ENCODE measurements at regions of chr21 and their contacts with region 1.

Region 1: DNA sequence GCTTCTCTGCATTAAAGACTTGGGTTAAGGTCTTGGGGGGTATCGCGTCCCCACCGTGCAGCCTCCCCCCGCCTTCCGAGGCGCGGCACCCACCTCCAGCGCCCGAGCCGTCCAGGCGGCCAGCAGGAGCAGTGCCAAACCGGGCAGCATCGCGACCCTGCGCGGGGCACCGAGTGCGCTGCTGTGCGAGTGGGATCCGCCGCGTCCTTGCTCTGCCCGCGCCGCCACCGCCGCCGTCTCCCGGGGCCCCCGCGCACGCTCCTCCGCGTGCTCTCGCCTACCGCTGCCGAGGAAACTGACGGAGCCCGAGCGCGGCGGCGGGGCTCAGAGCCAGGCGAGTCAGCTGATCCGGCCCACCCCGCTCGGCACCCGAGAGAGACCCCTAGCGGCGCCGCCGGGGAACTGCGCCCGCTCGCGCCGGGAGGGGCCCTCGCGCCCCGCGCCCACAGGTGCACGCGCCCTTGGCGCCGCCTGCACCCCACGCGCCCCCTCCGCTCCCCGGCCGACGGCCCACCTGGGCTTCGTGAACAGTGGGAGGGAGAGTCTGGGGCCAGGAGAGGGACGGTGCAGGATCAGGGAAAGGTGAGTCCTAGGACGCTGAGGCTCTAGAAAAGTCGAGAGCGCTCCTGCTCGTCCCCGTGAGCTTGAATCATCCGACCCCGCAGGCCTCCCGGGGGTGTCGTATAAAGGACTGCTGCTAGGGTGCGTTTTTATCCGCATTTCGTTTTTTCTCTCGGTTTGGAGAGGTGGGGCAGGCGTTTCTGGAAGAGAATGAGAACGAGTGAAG is at the start of gene APP:
- DNase-seq: peak; percentile 87
- H3K4me3 Mint-ChIP-seq: peak within 1 kb of the TSS; percentile 88
- H3K27ac Mint-ChIP-seq: peak within 1 kb of the TSS; percentile 67
- H3K4me1 Mint-ChIP-seq: peaks cover 28% of the 10 kb centered on the region
- H3K27me3 Mint-ChIP-seq: peaks cover 4% of the 10 kb centered on the region
- total RNA-seq, gene APP: 61.3 and 66.6 TPM in 2 replicates

Region 2: GRCh38 chr21:25215698-25216384 is 954.8 kb before region 1 on chr21:
- intact Hi-C with region 1: no loop called
- DNase-seq: no peak
- H3K4me3 Mint-ChIP-seq: no peak overlapping the region
- H3K27ac Mint-ChIP-seq: no peak overlapping the region
- H3K4me1 Mint-ChIP-seq: no peaks in the 10 kb centered on the region
- H3K27me3 Mint-ChIP-seq: no peaks in the 10 kb centered on the region

Region 3: GRCh38 chr21:25801217-25802014 is 369.2 kb before region 1 on chr21:
- intact Hi-C with region 1: loop called (anchors 5 kb)
- DNase-seq: peak; percentile 85
- H3K4me3 Mint-ChIP-seq: no peak overlapping the region
- H3K27ac Mint-ChIP-seq: no peak overlapping the region
- H3K4me1 Mint-ChIP-seq: peaks cover 7% of the 10 kb centered on the region
- H3K27me3 Mint-ChIP-seq: peaks cover 14% of the 10 kb centered on the region

Region 4: GRCh38 chr21:25881525-25882376 is 288.9 kb before region 1 on chr21:
- intact Hi-C with region 1: loop called (anchors 1 kb)
- DNase-seq: peak; percentile 48
- H3K4me3 Mint-ChIP-seq: no peak overlapping the region
- H3K27ac Mint-ChIP-seq: no peak overlapping the region
- H3K4me1 Mint-ChIP-seq: no peaks in the 10 kb centered on the region
- H3K27me3 Mint-ChIP-seq: no peaks in the 10 kb centered on the region

Region 5: GRCh38 chr21:25895565-25896205 is 275.0 kb before region 1 on chr21:
- intact Hi-C with region 1: loop called (anchors 1 kb)
- DNase-seq: no peak
- H3K4me3 Mint-ChIP-seq: no peak overlapping the region
- H3K27ac Mint-ChIP-seq: no peak overlapping the region
- H3K4me1 Mint-ChIP-seq: peaks cover 7% of the 10 kb centered on the region
- H3K27me3 Mint-ChIP-seq: no peaks in the 10 kb centered on the region

Region 6: DNA sequence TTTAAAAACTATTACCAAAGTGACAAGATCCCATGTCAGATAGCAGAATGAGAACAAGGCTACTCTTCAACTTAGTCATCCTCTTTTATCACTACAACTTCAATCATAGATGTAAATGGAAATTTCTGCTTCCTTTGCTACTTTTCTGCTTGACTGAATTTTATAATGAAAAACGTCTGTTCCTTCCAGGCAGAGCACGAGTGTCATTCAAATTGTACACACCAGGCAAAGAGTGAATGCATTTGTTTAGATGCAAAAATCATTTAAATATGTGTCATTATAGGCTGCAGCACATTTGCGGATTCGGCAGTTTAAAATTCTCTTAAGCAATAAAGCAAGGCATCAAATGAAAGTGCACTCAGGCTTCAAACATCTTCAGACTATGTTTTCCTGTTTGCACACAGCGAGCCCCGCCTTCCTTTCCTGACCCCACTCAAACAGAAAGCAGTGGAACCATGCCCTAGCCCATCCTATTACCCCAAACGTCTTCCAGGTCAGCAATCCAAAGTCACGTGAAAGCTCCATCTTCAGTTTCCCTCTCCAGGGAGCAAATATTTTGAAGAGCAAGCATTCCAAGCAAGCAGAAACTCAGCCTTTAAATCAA is 99.7 kb before region 1 on chr21:
- intact Hi-C with region 1: loop called (anchors 2 kb)
- DNase-seq: peak; percentile 40
- H3K4me3 Mint-ChIP-seq: peak overlapping the region; percentile 65
- H3K27ac Mint-ChIP-seq: peak overlapping the region; percentile 58
- H3K4me1 Mint-ChIP-seq: peaks cover 44% of the 10 kb centered on the region
- H3K27me3 Mint-ChIP-seq: no peaks in the 10 kb centered on the region

Region 7: DNA sequence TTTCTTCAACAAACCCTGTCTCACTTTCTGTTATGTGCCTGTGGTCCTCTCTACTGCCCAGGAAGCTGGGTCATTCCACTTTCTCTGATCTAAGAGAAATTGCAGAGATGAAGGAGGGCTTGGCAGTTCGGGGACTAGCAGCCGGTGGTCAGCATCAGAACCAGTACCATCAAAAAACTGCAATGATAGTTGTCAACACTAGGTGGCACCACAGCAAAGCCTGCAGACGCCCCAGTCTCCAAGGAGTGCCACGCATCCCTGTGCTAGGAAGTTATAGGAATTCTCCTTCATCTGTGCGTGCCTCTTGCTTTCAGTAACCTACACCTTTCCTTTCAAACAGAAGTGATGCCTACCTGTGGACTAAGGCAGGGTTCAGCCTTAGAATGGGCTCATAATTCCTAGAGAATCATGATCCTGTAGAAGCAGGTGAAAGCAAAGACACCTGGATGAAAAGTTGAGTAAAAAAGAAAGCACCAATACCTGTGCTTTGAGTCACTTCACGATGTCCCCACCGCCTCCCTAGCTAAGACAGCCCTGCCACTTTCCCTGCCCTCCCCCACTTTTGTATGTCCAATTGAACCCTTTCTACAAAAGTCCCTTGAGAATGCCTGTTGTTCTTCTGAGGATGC is 545.3 kb after region 1 on chr21:
- intact Hi-C with region 1: loop called (anchors 2 kb)
- DNase-seq: no peak
- H3K4me3 Mint-ChIP-seq: no peak overlapping the region
- H3K27ac Mint-ChIP-seq: no peak overlapping the region
- H3K4me1 Mint-ChIP-seq: no peaks in the 10 kb centered on the region
- H3K27me3 Mint-ChIP-seq: no peaks in the 10 kb centered on the region